ENCODE measurements at regions of chr3 and their contacts with region 1.

Region 1: GRCh38 chr3:192864941-192865340 is 52.7 kb downstream of the MB21D2 start:
- DNase-seq: peak in 1 of 2 donors; percentile 38
- ATAC-seq: peak in 7 of 8 donors; percentile 67 to 83 (median 76)
- H3K4me3 ChIP-seq: no peak overlapping the region
- H3K27ac ChIP-seq: peak overlapping the region in 2 of 10 donors; percentile 1 to 20
- H3K4me1 ChIP-seq: peaks cover 4 to 48% (median 23%) of the 10 kb centered on the region in 9 donors
- H3K27me3 ChIP-seq: no peaks in the 10 kb centered on the region
- CTCF ChIP-seq: no peak

Region 2: GRCh38 chr3:192831111-192831644 is 33.8 kb before region 1 on chr3:
- intact Hi-C with region 1: loop called in 1 of 10 experiments (anchors 5 kb)
- DNase-seq: no peak
- ATAC-seq: peak in 3 of 8 donors; percentile 6 to 31 (median 10)
- H3K4me3 ChIP-seq: no peak overlapping the region
- H3K27ac ChIP-seq: peak overlapping the region in 4 of 10 donors; percentile 3 to 51 (median 6)
- H3K4me1 ChIP-seq: peaks cover 0 to 69% (median 50%) of the 10 kb centered on the region in 9 donors
- H3K27me3 ChIP-seq: no peaks in the 10 kb centered on the region
- CTCF ChIP-seq: no peak